ENCODE measurements at regions of chr7 and their contacts with region 1.

Region 1: GRCh38 chr7:32901629-32902028 is 10.1 kb upstream of the KBTBD2 start:
- DNase-seq: no peak

Region 2: DNA sequence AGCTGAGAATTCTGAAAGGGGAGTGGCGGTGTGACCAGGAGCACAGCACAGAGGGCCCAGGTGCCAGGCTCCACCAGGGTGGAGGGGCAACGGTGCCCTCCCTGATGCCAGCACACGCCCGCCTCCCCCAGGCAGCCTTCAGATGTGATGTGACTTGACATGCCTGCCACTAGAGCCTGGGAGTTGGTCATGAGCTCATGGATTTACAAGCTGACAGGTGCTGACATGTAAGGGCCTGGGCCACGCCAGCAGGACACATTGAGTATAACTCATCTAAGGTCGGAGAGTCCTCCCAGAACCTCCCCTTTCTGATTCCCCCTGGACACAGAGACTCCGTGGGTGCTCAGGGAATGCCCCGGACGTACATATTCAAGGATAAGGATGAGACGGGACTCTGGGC is 485.7 kb before region 1 on chr7:
- intact Hi-C with region 1: no loop called
- DNase-seq: no peak

Region 3: GRCh38 chr7:32865448-32866030 is 36.1 kb before region 1 on chr7:
- intact Hi-C with region 1: loop called (anchors 5 kb)
- DNase-seq: no peak

Region 4: DNA sequence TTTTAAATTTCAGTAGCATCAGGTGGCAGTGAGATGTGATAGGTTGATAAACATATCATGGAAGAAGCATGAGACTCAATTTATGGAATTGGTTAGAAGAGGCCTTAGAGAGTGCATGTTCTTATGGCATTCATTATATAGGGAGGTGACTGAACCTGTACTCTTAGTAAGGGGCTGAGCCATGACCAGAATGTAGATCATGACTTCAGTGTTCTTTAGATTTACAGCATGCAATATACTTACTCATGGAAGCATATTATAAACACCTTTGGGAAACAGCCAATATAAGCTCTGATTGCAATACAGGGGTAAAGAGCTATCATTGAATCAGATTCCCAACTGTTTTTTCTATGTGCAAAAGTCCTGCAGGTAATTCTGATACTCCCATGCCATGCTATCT is 110.7 kb after region 1 on chr7:
- intact Hi-C with region 1: no loop called
- DNase-seq: no peak